ENCODE measurements at regions of chr11 and their contacts with region 1.

Region 1: DNA sequence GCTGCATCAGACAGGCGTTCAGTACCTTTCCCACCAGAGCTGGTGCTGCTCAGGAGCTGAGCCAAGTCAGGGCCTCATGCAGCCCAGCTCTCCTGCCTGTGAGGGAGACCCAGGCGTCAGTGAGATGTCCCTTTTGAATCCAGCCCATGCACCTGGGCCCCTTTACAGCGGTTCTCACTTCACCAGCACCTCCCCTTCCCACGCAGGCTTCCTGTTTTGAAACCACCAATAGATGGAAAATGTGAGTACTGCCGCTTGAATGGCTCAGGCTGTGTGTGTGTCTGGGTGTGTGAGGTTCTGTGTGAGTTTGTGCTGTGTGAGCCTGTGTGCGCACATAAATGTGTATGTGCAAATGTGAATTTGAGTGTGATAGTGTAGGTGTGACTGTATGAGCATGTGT is 88.4 kb downstream of the UBASH3B start:
- DNase-seq: peak; percentile 79
- ATAC-seq: peak; percentile 58
- H3K4me3 ChIP-seq: peak overlapping the region in 1 of 5 experiments; percentile 22
- H3K4me3 Mint-ChIP-seq: no peak overlapping the region
- H3K27ac ChIP-seq: peak overlapping the region; percentile 25 to 26
- H3K27ac Mint-ChIP-seq: no peak overlapping the region
- H3K4me1 ChIP-seq: peaks cover 46 to 63% of the 10 kb centered on the region in 2 donors
- H3K4me1 Mint-ChIP-seq: peaks cover 10% of the 10 kb centered on the region
- H3K27me3 ChIP-seq: peaks cover 0 to 12% (median 2%) of the 10 kb centered on the region in 4 experiments
- H3K27me3 Mint-ChIP-seq: no peaks in the 10 kb centered on the region
- CTCF ChIP-seq: no peak

Region 2: GRCh38 chr11:122655527-122656072 is 88.3 kb before region 1 on chr11 and contains the start of gene UBASH3B:
- CTCF ChIA-PET with region 1: interaction called, 8 read pairs
- POLR2A ChIA-PET with region 1: no interaction called
- intact Hi-C with region 1: loop called (anchors 2 kb)
- DNase-seq: peak; percentile 75
- ATAC-seq: peak; percentile 76
- H3K4me3 ChIP-seq: peak within 1 kb of the TSS; percentile 53 to 86 (median 75)
- H3K4me3 Mint-ChIP-seq: peak within 1 kb of the TSS; percentile 91
- H3K27ac ChIP-seq: peak within 1 kb of the TSS; percentile 19 to 62
- H3K27ac Mint-ChIP-seq: peak within 1 kb of the TSS; percentile 71
- H3K4me1 ChIP-seq: peaks cover 21 to 25% of the 10 kb centered on the region in 2 donors
- H3K4me1 Mint-ChIP-seq: peaks cover 31% of the 10 kb centered on the region
- H3K27me3 ChIP-seq: peaks cover 0 to 24% (median 13%) of the 10 kb centered on the region in 4 experiments
- H3K27me3 Mint-ChIP-seq: peaks cover 21% of the 10 kb centered on the region
- CTCF ChIP-seq: no peak
- total RNA-seq, gene UBASH3B: 3.6 and 4.2 TPM in 2 replicates

Region 3: DNA sequence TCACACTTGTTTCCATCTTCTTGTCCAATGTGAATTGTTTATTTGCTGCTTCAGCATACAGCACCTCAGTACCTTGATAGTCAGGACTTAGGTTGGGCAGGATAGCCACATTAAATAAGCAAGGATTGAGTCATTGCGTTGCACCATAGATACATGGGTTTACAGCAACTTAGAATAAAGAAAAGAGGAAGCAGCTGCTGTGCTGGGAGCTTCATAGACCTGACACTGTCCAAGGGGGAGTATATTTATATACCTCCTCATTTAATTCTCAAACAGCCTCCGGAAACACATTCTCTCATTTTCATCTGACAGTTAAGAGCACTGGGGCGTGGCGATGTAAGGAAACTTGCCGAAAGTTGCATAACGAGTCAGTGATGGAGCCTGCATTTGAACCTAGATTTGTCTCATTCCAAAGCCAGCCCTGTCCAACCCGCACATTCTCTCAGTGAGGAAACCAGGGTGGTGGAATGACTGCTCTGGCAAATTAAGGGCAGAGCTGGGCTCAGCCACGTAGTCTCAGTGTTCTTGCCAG is 46.2 kb before region 1 on chr11:
- CTCF ChIA-PET with region 1: interaction called, 7 read pairs
- POLR2A ChIA-PET with region 1: interaction called, 4 read pairs
- intact Hi-C with region 1: loop called (anchors 1 kb)
- DNase-seq: peak; percentile 71
- ATAC-seq: peak; percentile 90
- H3K4me3 ChIP-seq: peak overlapping the region in 4 of 5 experiments; percentile 3 to 34 (median 18)
- H3K4me3 Mint-ChIP-seq: peak overlapping the region; percentile 83
- H3K27ac ChIP-seq: peak overlapping the region; percentile 14 to 74
- H3K27ac Mint-ChIP-seq: peak overlapping the region; percentile 81
- H3K4me1 ChIP-seq: peaks cover 51 to 59% of the 10 kb centered on the region in 2 donors
- H3K4me1 Mint-ChIP-seq: peaks cover 60% of the 10 kb centered on the region
- H3K27me3 ChIP-seq: peaks cover 0 to under 1% (median 0%) of the 10 kb centered on the region in 4 experiments
- H3K27me3 Mint-ChIP-seq: no peaks in the 10 kb centered on the region
- CTCF ChIP-seq: no peak

Region 4: GRCh38 chr11:122711831-122712381 is 32.0 kb before region 1 on chr11:
- CTCF ChIA-PET with region 1: interaction called, 6 read pairs
- POLR2A ChIA-PET with region 1: interaction called, 12 read pairs
- intact Hi-C with region 1: loop called (anchors 1 kb)
- DNase-seq: no peak
- ATAC-seq: no peak
- H3K4me3 ChIP-seq: no peak overlapping the region
- H3K4me3 Mint-ChIP-seq: no peak overlapping the region
- H3K27ac ChIP-seq: no peak overlapping the region
- H3K27ac Mint-ChIP-seq: peak overlapping the region; percentile 26
- H3K4me1 ChIP-seq: peaks cover 52 to 60% of the 10 kb centered on the region in 2 donors
- H3K4me1 Mint-ChIP-seq: peaks cover 58% of the 10 kb centered on the region
- H3K27me3 ChIP-seq: no peaks in the 10 kb centered on the region
- H3K27me3 Mint-ChIP-seq: no peaks in the 10 kb centered on the region
- CTCF ChIP-seq: no peak

Region 5: DNA sequence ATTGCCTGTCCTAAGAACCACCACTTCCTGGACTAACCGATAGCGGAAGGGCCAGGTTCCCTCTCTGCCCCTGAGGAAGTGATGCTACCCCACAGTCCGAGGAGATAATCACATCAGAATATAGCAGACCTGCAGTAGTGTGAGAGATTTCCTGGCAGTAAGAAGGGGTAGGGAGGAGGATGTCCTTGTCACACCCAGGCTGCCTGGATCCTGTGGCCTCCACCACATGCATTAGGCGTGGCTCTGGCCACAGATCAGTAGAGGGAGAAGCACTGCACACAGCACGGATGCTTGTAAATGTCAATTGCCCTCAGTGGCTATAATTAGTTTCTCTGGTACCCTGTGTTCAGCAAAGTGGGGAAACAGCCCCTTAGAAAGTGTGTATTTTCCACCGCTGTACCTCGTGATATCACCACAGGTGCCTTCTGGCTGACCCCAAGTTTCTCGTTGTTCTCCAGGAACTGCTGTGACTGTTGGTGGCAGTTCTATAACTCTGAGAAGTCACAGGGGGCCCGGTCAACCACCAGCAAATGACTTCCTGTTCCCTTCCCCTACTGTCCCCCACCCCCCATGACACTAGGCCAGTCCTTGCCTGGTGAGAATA is 26.6 kb before region 1 on chr11:
- CTCF ChIA-PET with region 1: interaction called, 6 read pairs
- POLR2A ChIA-PET with region 1: interaction called, 12 read pairs
- intact Hi-C with region 1: loop called (anchors 1 kb)
- DNase-seq: peak; percentile 86
- ATAC-seq: peak; percentile 73
- H3K4me3 ChIP-seq: peak overlapping the region in 2 of 5 experiments; percentile 6 to 12
- H3K4me3 Mint-ChIP-seq: peak overlapping the region; percentile 74
- H3K27ac ChIP-seq: peak overlapping the region; percentile 62 to 76
- H3K27ac Mint-ChIP-seq: peak overlapping the region; percentile 83
- H3K4me1 ChIP-seq: peaks cover 73 to 76% of the 10 kb centered on the region in 2 donors
- H3K4me1 Mint-ChIP-seq: peaks cover 77% of the 10 kb centered on the region
- H3K27me3 ChIP-seq: peaks cover 0 to 11% (median 2%) of the 10 kb centered on the region in 4 experiments
- H3K27me3 Mint-ChIP-seq: peaks cover 6% of the 10 kb centered on the region
- CTCF ChIP-seq: no peak

Region 6: DNA sequence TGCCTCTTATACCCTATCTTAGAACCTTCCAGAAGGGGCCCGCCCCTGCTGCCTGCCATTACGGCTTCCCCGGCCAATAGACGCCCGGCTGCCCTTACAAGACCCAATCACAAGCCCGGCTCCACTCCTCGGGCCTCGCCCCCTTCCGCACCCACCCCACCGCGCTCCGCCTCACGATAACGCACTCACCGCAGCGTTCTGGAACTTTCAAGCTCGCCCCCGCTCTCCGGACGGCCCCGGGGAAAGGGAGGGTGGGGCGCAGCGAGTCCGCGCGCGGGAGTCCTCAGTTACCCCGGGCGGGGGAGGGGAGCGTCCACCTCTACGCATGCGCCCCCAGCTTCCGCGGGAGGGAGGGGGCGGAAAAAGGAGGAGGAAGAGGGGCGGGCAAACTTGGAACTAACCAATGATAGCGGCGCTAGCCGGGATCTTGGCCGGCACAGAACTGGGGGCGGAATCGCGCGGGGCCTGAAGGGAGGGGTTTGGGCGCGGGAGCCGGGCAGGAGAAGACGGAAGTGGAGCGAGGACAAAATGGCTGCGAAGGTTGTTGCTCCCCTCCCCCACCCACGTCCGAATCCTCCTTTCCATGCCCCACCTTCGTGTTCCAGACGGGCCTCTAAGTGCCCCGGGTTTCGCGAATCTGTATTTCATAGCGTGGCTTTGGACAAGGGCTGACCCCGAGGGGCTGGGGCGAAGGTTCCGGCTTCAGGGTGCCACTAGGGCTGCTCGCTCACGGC is 318.4 kb after region 1 on chr11:
- CTCF ChIA-PET with region 1: no interaction called
- POLR2A ChIA-PET with region 1: interaction called, 11 read pairs
- intact Hi-C with region 1: loop called (anchors 1 kb)
- DNase-seq: peak; percentile 100
- ATAC-seq: peak; percentile 81
- H3K4me3 ChIP-seq: peak overlapping the region; percentile 88 to 100 (median 96)
- H3K4me3 Mint-ChIP-seq: peak overlapping the region; percentile 99
- H3K27ac ChIP-seq: peak overlapping the region; percentile 99 to 100
- H3K27ac Mint-ChIP-seq: peak overlapping the region; percentile 100
- H3K4me1 ChIP-seq: peaks cover 63 to 68% of the 10 kb centered on the region in 2 donors
- H3K4me1 Mint-ChIP-seq: peaks cover 69% of the 10 kb centered on the region
- H3K27me3 ChIP-seq: no peaks in the 10 kb centered on the region
- H3K27me3 Mint-ChIP-seq: no peaks in the 10 kb centered on the region
- CTCF ChIP-seq: no peak

Region 7: GRCh38 chr11:123261345-123262106 is 517.6 kb after region 1 on chr11:
- CTCF ChIA-PET with region 1: no interaction called
- POLR2A ChIA-PET with region 1: no interaction called
- intact Hi-C with region 1: no loop called
- DNase-seq: peak; percentile 25
- ATAC-seq: peak; percentile 53
- H3K4me3 ChIP-seq: peak overlapping the region in 1 of 5 experiments; percentile 16
- H3K4me3 Mint-ChIP-seq: peak overlapping the region; percentile 52
- H3K27ac ChIP-seq: no peak overlapping the region
- H3K27ac Mint-ChIP-seq: no peak overlapping the region
- H3K4me1 ChIP-seq: peaks cover 9 to 10% of the 10 kb centered on the region in 2 donors
- H3K4me1 Mint-ChIP-seq: peaks cover 23% of the 10 kb centered on the region
- H3K27me3 ChIP-seq: peaks cover 0 to 7% (median 1%) of the 10 kb centered on the region in 4 experiments
- H3K27me3 Mint-ChIP-seq: peaks cover 18% of the 10 kb centered on the region
- CTCF ChIP-seq: peak; percentile 43

Region 8: GRCh38 chr11:123707606-123708205 is 963.8 kb after region 1 on chr11:
- CTCF ChIA-PET with region 1: no interaction called
- POLR2A ChIA-PET with region 1: no interaction called
- intact Hi-C with region 1: no loop called
- DNase-seq: peak; percentile 55
- ATAC-seq: no peak
- H3K4me3 ChIP-seq: no peak overlapping the region
- H3K4me3 Mint-ChIP-seq: no peak overlapping the region
- H3K27ac ChIP-seq: no peak overlapping the region
- H3K27ac Mint-ChIP-seq: no peak overlapping the region
- H3K4me1 ChIP-seq: peaks cover 1 to 3% of the 10 kb centered on the region in 2 donors
- H3K4me1 Mint-ChIP-seq: peaks cover 7% of the 10 kb centered on the region
- H3K27me3 ChIP-seq: peaks cover 0 to 3% (median 0%) of the 10 kb centered on the region in 4 experiments
- H3K27me3 Mint-ChIP-seq: peaks cover 10% of the 10 kb centered on the region
- CTCF ChIP-seq: peak; percentile 75